Cardiac septum (tissue), 1 donor: ENCODE measurements at regions of chr4 and their contacts with region 1.

Region 1: GRCh38 chr4:151801547-151802516 is 41.0 kb upstream of the GATB start:
- DNase-seq: no peak

Region 2: GRCh38 chr4:151667048-151667447 is 134.8 kb before region 1 on chr4:
- intact Hi-C with region 1: loop called (anchors 5 kb)
- DNase-seq: no peak

Region 3: GRCh38 chr4:151760712-151761527 is 40.9 kb before region 1 on chr4 and contains the start of gene GATB:
- intact Hi-C with region 1: loop called (anchors 2 kb)
- DNase-seq: peak; percentile 95
- total RNA-seq, gene GATB: 75.1 TPM

Region 4: DNA sequence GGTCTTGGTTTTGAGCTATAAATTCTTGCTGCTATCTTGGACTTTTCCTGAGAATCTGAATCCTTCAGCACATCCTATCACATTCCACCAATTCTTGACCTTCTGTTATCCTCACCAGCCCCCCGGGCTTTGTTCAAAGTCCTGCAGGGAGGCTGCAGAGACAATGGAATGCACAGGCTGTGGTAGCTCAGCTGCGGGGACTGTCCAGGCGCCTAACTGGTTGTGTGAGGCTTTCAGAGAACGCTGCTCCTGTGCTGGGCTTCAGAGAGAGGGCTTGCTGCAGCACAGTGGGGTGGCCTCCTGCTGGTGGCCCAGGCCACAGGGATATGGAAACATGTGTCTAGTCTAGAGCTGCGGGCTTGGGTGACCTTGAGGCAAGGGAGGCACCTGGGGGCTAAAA is 155.3 kb after region 1 on chr4:
- intact Hi-C with region 1: loop called (anchors 5 kb)
- DNase-seq: no peak

Region 5: GRCh38 chr4:152385551-152385950 is 583.7 kb after region 1 on chr4:
- intact Hi-C with region 1: loop called (anchors 5 kb)
- DNase-seq: no peak